ENCODE measurements at regions of chr6 and their contacts with region 1.

Region 1: DNA sequence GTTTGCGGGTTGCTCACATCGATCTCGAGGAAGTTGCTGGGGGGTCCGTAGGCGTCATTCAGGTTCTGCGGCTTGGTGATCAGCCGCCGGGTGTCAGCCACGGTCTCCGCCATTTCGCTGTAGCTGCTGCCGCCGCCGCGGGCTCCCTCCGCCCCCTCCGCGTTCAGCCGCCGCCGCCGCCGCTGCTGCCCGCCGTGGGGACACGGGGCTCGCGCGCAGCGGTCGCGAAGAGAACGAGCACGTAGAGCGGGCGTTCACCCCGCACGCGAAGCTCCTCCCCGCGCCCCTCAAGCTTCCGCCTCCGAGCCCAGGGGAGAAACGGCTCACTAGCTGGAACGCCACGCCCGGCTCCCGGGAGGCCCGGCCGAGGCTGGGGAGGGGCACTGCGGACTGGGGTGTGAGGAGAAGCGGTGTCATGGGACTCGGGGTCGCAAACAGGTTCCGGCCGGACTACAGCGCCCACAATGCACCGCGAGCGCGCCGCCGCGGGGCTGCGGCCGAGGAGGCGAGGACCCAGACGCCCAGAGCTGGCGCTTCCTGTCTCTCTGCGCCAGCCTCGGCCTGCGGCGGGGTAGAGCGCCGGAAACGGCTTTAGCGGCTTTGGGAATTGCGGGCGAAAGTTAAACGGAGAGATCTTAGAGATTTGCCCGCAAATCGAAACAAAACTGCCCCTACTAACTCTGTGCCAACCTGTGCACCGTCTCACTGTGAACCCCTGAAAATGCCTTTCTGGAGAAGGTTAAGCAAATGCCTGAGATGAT is at the start of gene SNX3:
- DNase-seq: peak; percentile 93 to 97 (median 95)
- ATAC-seq: peak; percentile 95
- H3K4me3 ChIP-seq: peak within 1 kb of the TSS; percentile 100
- H3K27ac ChIP-seq: peak within 1 kb of the TSS; percentile 86
- H3K4me1 ChIP-seq: peaks cover 10 to 17% of the 10 kb centered on the region in 2 experiments
- H3K27me3 ChIP-seq: no peaks in the 10 kb centered on the region
- CTCF ChIP-seq: peak; percentile 8 to 39 (median 17); a peak in 2 of 6 replicates
- EP300 ChIP-seq: no peak
- POLR2A ChIP-seq: peak; percentile 92
- RAD21 ChIP-seq: no peak
- polyA plus RNA-seq, gene SNX3: 48.9 to 68.3 TPM

Region 2: DNA sequence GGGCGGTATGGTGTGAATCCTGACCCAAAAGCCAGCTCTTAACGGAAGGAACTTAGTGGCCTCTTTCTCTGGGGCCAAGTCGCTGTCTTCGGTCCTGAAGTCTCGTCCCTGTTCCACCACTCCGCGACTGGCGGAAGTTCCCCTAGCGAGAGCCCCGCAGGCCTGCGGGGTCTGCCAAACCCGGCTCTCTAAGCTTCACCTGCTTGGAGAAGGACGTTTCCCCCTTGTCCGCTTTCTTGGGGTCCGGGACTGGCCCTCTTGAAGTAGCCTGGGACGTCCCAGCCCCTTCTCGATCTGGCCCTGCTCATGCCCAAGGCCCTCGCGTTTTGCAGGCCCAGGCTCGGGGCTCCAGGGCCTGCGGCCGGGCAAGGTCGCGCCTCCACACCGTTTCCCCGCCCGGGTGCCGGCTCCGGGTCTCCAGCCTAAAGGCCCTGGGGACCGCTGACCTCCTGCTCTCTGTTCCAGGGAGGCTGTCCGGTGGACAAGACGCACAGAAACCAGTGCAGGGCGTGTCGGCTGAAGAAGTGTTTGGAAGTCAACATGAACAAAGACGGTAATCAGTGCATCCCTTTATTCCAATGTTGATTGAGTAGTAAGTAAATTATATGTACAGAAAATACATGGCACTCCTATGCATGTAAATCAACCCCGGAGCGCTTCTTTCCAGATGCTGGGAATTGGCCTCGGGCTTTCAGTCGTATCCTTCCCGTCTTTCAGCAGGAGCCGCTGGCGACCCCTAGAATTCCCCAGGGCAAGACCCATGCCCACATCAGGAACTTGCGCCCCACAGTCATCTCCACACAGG is 86.4 kb before region 1 on chr6:
- CTCF ChIA-PET with region 1: no interaction called
- POLR2A ChIA-PET with region 1: no interaction called
- in situ Hi-C with region 1: no loop called
- intact Hi-C with region 1: no loop called
- DNase-seq: peak in 1 of 4 experiments; percentile 15
- ATAC-seq: no peak
- H3K4me3 ChIP-seq: no peak overlapping the region
- H3K27ac ChIP-seq: no peak overlapping the region
- H3K4me1 ChIP-seq: peaks cover 0 to 27% of the 10 kb centered on the region in 2 experiments; a peak in 3 of 5 replicates
- H3K27me3 ChIP-seq: peaks cover 46 to 65% of the 10 kb centered on the region in 2 experiments
- CTCF ChIP-seq: no peak
- EP300 ChIP-seq: no peak
- POLR2A ChIP-seq: no peak
- RAD21 ChIP-seq: no peak

Region 3: DNA sequence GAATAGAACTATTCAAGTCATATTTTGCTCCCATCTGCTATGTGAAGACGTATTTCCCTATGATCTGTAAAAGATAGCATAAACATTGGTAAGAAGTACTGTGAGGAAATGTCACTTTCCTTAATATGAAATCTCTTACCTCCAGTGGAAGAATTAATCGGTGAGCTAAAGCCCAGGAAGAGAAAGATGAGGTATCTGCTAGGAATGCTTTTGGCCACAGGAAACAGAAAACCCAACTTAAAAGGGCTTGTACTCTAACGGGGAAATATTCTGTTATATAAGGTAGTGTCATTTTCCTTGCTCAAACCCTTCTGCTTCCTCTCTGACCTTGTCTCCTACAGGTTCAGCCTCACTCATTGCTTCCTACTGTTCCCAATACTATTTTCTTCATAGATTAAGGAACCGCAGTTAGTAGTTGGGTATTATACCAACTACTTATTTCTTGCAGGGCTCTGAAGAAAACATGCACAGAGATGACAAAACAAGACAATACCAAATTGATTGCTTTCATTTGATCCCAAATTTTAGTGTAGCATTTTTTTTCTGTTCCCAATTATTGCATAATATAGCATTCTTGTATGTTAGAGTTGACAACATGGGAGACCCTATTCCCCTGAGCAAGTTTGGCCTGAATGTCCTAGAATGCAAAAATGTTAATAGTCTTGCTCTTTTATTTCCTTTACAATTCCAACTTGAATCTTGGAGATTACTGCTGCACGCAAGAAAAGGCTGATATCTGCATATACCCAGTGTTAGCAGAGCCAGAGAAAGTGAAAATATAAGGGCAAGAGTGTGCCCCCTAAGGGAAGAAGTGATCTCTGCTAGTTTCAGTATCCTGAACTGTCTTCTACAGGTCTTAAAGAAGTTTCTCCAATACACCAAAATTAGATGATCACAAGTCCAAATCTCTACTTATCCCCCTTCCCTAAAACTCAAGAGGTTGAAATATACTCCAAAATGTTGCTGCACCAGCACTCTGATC is 99.2 kb after region 1 on chr6:
- CTCF ChIA-PET with region 1: no interaction called
- POLR2A ChIA-PET with region 1: interaction called, 6 read pairs
- in situ Hi-C with region 1: no loop called
- intact Hi-C with region 1: loop called (anchors 2 kb)
- DNase-seq: peak in 2 of 4 experiments; percentile 19 to 36
- ATAC-seq: peak; percentile 76
- H3K4me3 ChIP-seq: no peak overlapping the region
- H3K27ac ChIP-seq: peak overlapping the region; percentile 91
- H3K4me1 ChIP-seq: peaks cover 10 to 30% of the 10 kb centered on the region in 2 experiments
- H3K27me3 ChIP-seq: no peaks in the 10 kb centered on the region
- CTCF ChIP-seq: peak; percentile 33 to 49 (median 44); a peak in 4 of 6 replicates
- EP300 ChIP-seq: no peak
- POLR2A ChIP-seq: no peak
- RAD21 ChIP-seq: peak; percentile 34 to 55

Measured in K562 (cell line).